ENCODE measurements at regions of chr10 and their contacts with region 1.

Region 1: GRCh38 chr10:122051251-122051996 is 62.5 kb downstream of the TACC2 start:
- DNase-seq: peak; percentile 77
- H3K4me3 ChIP-seq: no peak overlapping the region
- H3K27ac ChIP-seq: no peak overlapping the region
- H3K4me1 ChIP-seq: peaks cover 15% of the 10 kb centered on the region
- H3K27me3 ChIP-seq: no peaks in the 10 kb centered on the region
- CTCF ChIP-seq: peak; percentile 75 to 89
- POLR2A ChIP-seq: no peak

Region 2: GRCh38 chr10:120948889-120949608 is 1102.4 kb before region 1 on chr10:
- CTCF ChIA-PET with region 1: interaction called, 14 read pairs
- POLR2A ChIA-PET with region 1: no interaction called
- dilution Hi-C with region 1: no loop called
- intact Hi-C with region 1: loop called (anchors 5 kb)
- DNase-seq: peak; percentile 66
- H3K4me3 ChIP-seq: peak overlapping the region in 2 of 3 experiments; percentile 31 to 36
- H3K27ac ChIP-seq: no peak overlapping the region
- H3K4me1 ChIP-seq: peaks cover 9% of the 10 kb centered on the region
- H3K27me3 ChIP-seq: peaks cover 21 to 28% of the 10 kb centered on the region in 2 experiments
- CTCF ChIP-seq: peak; percentile 85 to 91
- POLR2A ChIP-seq: no peak

Region 3: GRCh38 chr10:121900443-121901174 is 150.8 kb before region 1 on chr10:
- CTCF ChIA-PET with region 1: interaction called, 17 read pairs
- POLR2A ChIA-PET with region 1: no interaction called
- dilution Hi-C with region 1: no loop called
- intact Hi-C with region 1: no loop called
- DNase-seq: peak; percentile 78
- H3K4me3 ChIP-seq: no peak overlapping the region
- H3K27ac ChIP-seq: no peak overlapping the region
- H3K4me1 ChIP-seq: no peaks in the 10 kb centered on the region
- H3K27me3 ChIP-seq: no peaks in the 10 kb centered on the region
- CTCF ChIP-seq: peak; percentile 43 to 47
- POLR2A ChIP-seq: no peak

Region 4: GRCh38 chr10:121974535-121975294 is 76.7 kb before region 1 on chr10 and contains the start of gene NSMCE4A:
- CTCF ChIA-PET with region 1: interaction called, 4 read pairs
- POLR2A ChIA-PET with region 1: no interaction called
- dilution Hi-C with region 1: no loop called
- intact Hi-C with region 1: loop called (anchors 2 kb)
- DNase-seq: peak; percentile 77
- H3K4me3 ChIP-seq: peak within 1 kb of the TSS; percentile 80 to 92 (median 85)
- H3K27ac ChIP-seq: peak within 1 kb of the TSS; percentile 81
- H3K4me1 ChIP-seq: peaks cover 10% of the 10 kb centered on the region
- H3K27me3 ChIP-seq: no peaks in the 10 kb centered on the region
- CTCF ChIP-seq: peak; percentile 73 to 87
- POLR2A ChIP-seq: peak; percentile 66
- total RNA-seq, gene NSMCE4A: 51.0 and 52.0 TPM in 2 replicates

Region 5: DNA sequence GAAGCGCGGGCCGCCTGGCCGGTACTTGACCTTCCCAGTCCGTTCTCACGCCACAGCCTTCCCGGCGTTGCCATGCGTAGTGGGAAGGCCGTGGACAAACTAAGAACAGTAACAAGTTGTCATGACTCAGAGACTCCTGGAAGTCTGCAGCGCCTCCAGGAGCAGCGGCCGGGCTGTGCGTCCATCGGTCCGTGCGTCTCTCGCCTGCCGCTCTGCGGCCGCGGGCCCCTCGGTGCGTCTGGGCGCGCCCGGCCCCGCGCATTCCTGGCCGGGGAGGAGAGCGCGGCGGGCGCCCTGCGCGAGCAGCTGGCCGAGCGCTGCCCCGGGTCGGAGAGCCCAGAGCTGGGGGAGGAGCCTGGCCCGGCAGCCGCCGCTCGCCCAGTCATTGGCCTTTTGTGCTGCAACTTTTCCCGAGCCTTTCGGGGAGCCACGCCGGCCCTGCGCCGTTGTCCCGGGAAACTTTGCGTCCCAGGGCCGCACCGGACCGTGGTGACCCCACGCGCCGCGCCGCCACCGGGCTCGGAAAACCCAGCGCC is 61.3 kb after region 1 on chr10:
- CTCF ChIA-PET with region 1: interaction called, 35 read pairs
- POLR2A ChIA-PET with region 1: interaction called, 6 read pairs
- dilution Hi-C with region 1: no loop called
- intact Hi-C with region 1: loop called (anchors 1 kb)
- DNase-seq: peak; percentile 97
- H3K4me3 ChIP-seq: peak overlapping the region; percentile 49 to 59 (median 54)
- H3K27ac ChIP-seq: peak overlapping the region; percentile 100
- H3K4me1 ChIP-seq: peaks cover 42% of the 10 kb centered on the region
- H3K27me3 ChIP-seq: no peaks in the 10 kb centered on the region
- CTCF ChIP-seq: peak; percentile 43 to 53
- POLR2A ChIP-seq: peak; percentile 40

Region 6: GRCh38 chr10:122221958-122222357 is 170.5 kb after region 1 on chr10:
- CTCF ChIA-PET with region 1: interaction called, 3 read pairs
- POLR2A ChIA-PET with region 1: no interaction called
- dilution Hi-C with region 1: no loop called
- intact Hi-C with region 1: loop called (anchors 5 kb)
- DNase-seq: no peak
- H3K4me3 ChIP-seq: no peak overlapping the region
- H3K27ac ChIP-seq: no peak overlapping the region
- H3K4me1 ChIP-seq: no peaks in the 10 kb centered on the region
- H3K27me3 ChIP-seq: no peaks in the 10 kb centered on the region
- CTCF ChIP-seq: no peak
- POLR2A ChIP-seq: no peak

Region 7: DNA sequence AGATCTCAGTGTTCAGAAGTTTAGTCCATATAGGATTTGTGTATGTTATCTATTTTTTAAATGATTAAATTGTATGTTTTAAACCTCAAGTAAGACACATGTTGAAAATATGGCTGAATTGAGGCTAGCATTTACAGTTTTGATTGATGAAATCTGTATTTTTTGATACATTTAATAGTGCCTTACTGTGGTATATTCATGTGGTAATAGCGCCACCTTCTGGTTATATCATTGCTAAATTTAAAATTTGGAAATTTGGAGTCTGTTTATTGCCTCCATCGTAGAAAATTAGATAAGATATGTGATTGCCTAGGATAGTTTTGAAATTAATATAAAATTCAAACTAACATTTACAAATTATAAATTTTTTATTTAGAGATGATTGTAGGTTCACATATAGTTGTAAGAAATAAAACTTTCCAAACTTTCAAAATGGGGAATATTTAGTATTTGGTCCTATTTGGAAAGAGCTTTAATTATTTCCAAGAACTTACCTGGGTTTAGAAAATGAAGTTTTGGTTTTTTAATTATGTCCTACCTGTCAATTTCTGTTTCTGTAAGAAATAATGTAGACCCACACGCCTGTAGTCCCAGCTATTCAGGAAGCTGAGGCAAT is 383.9 kb after region 1 on chr10:
- CTCF ChIA-PET with region 1: interaction called, 3 read pairs
- POLR2A ChIA-PET with region 1: no interaction called
- dilution Hi-C with region 1: no loop called
- intact Hi-C with region 1: loop called (anchors 1 kb)
- DNase-seq: peak; percentile 64
- H3K4me3 ChIP-seq: no peak overlapping the region
- H3K27ac ChIP-seq: no peak overlapping the region
- H3K4me1 ChIP-seq: no peaks in the 10 kb centered on the region
- H3K27me3 ChIP-seq: no peaks in the 10 kb centered on the region
- CTCF ChIP-seq: peak; percentile 8 to 23
- POLR2A ChIP-seq: no peak

Measured in endothelial cell of umbilical vein (primary cell).